WTC11 (cell line): ENCODE measurements at regions of chr17 and their contacts with region 1.

Region 1: DNA sequence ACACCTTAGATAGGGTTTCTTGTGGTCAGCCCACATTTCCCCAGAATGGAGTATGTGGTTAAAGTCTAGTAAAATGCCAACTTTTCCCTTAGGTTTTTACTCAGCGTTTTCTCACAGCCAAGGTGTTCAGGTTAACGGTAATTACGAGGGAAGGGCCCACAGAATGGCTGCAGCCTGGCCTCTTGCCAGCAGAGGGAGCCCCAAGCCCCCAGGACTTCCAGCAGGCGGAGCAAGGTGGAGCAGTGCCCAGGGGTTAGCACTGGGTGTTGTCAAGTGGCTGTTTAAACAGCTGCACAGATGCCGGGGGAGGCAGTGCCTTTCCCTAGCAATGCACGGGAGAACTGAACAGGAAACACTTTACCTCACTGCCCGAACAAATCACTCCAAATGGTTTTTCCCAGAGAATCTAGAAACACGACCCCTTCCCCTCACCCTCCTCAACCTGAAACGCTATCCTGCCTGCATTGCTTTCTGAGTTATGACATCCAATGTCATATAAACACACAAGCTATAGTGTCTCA is 6.6 kb downstream of the PHB1 start:
- DNase-seq: peak; percentile 91
- ATAC-seq: peak; percentile 99
- H3K4me3 Mint-ChIP-seq: no peak overlapping the region
- H3K27ac Mint-ChIP-seq: 0 out of 2 replicates have a peak overlapping the region, but pooled peaks have one; percentile 73
- H3K4me1 Mint-ChIP-seq: no peaks in the 10 kb centered on the region
- H3K27me3 Mint-ChIP-seq: no peaks in the 10 kb centered on the region
- CTCF ChIP-seq: peak; percentile 91

Region 2: DNA sequence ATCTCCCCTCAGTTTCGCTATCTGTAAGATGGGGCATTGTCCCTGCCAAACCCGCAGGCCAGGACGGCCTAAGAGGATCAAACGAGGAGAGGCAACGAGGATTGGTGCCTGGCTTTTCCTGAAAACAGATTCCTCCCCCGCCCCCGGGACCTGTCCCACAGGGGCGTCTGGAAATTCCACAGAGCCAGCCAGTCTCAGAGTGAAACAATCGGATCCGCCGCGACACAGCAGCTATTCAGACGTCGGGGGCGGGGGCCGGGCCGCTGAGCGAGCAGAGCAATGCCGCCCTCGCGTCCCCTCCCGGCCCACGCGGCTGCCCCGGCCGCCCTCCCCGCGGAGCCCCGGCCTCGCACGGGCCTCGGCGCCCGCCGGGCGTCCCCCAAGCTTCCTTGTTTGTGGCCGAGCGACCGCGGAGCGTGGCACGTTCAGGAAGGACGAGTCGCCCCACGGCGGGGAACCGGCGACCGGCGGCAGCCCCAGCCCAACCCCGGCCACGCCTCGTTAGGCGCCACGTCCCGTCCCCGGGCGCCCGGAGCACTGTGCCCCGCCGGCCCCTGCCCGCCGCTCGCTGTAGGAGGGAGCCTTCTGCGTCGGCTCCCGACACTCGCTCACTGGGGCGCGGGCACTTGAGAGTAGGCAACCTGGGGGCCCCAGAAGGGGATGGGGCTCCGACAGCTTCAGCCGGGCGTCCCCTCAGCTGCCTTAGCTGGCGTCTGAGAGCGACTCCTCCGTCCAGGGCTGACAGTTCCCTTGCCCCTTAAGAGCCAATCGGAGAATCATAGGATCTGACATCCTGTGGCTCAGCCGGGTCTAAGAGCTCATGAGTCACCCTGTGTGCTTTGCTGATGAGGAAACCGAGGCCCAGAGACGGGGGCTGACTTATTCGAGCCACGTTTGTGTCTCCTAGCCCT is 147.8 kb before region 1 on chr17:
- CTCF ChIA-PET with region 1: no interaction called
- POLR2A ChIA-PET with region 1: no interaction called
- DNase-seq: peak; percentile 48
- ATAC-seq: peak; percentile 75
- H3K4me3 Mint-ChIP-seq: peak overlapping the region; percentile 80
- H3K27ac Mint-ChIP-seq: no peak overlapping the region
- H3K4me1 Mint-ChIP-seq: peaks cover 8% of the 10 kb centered on the region
- H3K27me3 Mint-ChIP-seq: peaks cover 27% of the 10 kb centered on the region
- CTCF ChIP-seq: no peak

Region 3: GRCh38 chr17:49508061-49508865 is 100.2 kb after region 1 on chr17:
- CTCF ChIA-PET with region 1: interaction called, 13 read pairs
- POLR2A ChIA-PET with region 1: no interaction called
- DNase-seq: peak; percentile 78
- ATAC-seq: peak; percentile 73
- H3K4me3 Mint-ChIP-seq: peak overlapping the region; percentile 49
- H3K27ac Mint-ChIP-seq: peak overlapping the region; percentile 85
- H3K4me1 Mint-ChIP-seq: peaks cover 60% of the 10 kb centered on the region
- H3K27me3 Mint-ChIP-seq: peaks cover 7% of the 10 kb centered on the region; the same call in 1 of the 2 replicates
- CTCF ChIP-seq: no peak